Ovary (tissue), 10 donors: ENCODE measurements at regions of chr1 and their contacts with region 1.

Region 1: DNA sequence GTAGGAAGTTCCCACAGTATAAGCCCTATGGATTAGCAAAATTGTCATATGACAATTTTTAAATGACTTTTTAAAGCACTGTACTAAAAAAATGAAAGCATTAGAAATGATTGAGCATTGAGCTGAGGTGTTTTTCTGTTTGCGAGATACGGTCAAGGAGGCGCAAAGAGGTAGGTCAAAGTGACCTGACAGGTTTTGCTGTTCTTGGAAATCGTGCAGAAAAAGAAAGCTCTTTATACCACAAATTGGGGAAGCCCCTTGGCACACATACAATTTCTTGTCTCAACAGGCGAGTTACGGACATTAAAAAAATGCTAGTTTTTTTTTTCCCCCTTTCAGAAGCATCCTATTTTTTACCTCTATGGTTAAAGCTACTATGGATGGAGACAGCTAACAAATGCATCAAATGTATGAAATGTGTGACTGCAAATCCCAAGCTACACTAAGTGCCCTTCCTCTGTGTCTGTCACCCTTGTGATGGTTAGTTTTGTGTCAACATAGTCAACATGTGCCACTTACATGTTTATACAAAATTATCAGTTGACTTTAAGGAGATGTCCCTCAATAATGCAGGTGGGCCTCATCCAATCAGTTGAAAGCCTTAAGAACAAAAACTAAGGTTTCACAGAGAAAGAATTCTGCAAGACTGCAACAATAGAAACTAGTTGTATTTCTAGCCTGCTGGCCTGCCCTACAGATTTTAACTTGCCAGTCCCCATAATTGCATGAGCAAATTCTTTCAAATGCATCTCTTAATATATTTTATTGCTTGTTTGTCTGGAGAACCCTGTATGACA is 29.3 kb downstream of the CRYZ start:
- DNase-seq: no peak
- H3K4me3 ChIP-seq: no peak overlapping the region
- H3K27ac ChIP-seq: no peak overlapping the region
- H3K4me1 ChIP-seq: no peaks in the 10 kb centered on the region
- H3K27me3 ChIP-seq: no peaks in the 10 kb centered on the region
- CTCF ChIP-seq: no peak
- EP300 ChIP-seq: no peak
- POLR2A ChIP-seq: no peak

Region 2: DNA sequence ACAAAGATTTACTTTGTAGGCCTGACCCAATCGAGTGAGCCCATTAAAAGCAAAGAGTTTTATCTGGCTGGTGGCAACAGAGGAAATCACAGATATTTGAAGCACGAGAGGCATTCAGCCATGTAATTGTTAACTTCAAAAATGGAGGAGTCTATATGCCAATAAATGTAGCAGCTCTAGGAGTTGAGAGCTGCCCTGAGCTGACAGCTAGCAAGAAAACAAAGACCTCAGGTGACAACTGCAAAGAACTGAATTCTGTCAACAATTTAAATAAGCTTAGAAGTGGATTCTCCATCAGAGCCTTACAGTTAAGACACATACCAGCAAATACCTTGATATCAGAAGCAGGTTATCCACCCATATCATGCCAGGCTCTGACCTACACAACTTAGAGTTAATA is 1958.2 kb before region 1 on chr1:
- intact Hi-C with region 1: loop called in 1 of 4 experiments (anchors 10 kb)
- DNase-seq: no peak
- H3K4me3 ChIP-seq: no peak overlapping the region
- H3K27ac ChIP-seq: no peak overlapping the region
- H3K4me1 ChIP-seq: no peaks in the 10 kb centered on the region
- H3K27me3 ChIP-seq: no peaks in the 10 kb centered on the region
- CTCF ChIP-seq: no peak
- EP300 ChIP-seq: no peak
- POLR2A ChIP-seq: no peak